B cell (primary cell): ENCODE measurements at regions of chr10 and their contacts with region 1.

Region 1: DNA sequence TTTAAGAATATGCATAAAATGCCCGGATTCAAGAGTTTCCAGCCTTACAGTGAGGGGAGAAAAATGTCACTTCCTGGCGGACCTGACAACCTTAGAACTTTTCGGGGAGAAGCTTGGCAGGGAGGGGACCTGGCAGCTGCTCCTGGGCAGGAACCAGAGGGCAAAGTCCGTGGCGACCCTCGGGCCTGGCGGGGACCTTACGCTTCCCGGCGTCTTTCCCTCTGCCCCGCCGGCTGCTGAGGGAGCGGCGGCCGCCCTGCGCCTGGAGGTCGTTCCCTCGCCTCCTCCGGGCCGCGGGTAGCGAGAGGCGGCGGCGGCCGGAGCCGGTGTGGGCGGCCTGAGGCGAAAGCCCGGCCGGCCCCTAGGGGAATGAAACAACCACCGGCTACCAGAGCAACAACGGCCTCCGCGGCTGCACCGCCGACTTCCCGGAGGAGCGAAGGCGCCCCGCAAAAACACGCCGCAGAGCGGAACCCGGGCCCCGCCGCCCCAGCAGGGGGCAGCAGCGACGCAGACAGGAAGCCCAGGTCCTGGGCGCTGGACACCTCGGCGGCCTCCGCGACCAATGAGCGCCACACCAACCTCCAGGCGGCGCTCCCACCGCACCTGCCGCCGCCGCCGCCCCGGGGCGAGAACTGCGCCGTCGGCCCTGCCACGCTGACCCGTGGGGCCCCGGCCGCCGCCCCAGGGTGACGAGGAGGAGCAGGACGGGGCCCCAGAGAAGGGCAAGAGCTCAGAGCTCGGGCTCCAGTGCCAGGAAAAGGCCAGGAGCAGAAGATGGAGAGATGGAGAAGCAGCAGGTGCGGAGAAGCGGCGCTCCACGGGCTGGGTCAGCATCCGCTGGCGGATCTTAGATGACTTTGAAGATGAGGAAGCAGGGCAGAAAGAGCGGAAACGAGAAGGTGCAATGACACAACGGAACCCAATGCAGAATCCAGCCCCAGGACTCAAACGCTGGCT is 10.5 kb upstream of the ACSM6 start:
- DNase-seq: peak; percentile 89
- ATAC-seq: peak; percentile 97
- H3K4me3 ChIP-seq: peak overlapping the region; percentile 41 to 75 (median 55)
- H3K4me3 Mint-ChIP-seq: peak overlapping the region; percentile 87
- H3K27ac ChIP-seq: peak overlapping the region; percentile 25 to 79
- H3K27ac Mint-ChIP-seq: peak overlapping the region; percentile 82
- H3K4me1 ChIP-seq: peaks cover 0 to 7% of the 10 kb centered on the region in 2 donors
- H3K4me1 Mint-ChIP-seq: peaks cover 7% of the 10 kb centered on the region
- H3K27me3 ChIP-seq: no peaks in the 10 kb centered on the region
- H3K27me3 Mint-ChIP-seq: no peaks in the 10 kb centered on the region
- CTCF ChIP-seq: peak; percentile 97

Region 2: DNA sequence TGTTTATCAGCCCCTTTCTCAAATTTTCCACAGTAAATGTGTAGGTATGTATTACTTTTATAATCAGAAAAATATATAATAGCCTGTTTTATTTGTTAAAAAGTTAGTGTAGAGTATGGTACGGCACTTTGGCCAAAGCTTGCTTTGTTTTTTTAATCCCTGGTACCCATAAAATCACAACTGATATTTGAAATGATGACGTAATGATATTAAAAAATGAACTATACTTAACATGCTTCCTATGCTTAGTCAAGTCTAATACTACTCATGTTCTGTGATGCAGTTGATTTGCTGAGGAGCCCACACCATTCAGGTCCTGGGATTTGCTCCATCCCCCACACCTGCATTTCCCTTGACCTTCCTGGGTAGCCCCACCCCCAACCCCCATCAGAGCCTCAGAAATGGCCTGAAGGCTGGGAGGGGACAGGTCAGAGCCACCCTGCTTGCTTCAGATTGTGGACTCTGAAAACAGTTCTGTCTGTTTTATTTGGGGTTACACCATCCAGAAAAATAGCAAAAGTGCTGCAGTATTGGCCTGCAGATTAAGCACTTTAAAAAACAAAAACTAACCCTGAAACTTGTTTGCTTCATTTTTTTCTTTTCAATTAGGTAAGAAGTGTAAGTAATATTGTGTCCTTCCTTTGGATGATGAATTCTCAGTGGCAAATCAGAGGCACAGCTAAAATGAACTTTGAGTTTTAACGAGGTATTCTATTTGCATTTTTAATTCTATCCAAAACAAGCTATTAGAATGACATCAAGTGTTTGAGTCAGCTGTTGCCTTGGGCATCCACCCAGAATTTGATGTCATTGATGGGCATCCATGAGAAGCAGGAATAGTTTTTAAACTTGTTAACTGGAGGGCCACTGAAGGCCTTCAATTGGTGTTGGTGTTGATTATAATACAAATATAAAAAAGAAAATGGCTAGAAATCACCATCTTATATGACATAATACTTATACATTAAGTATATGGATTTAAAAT is 1166.5 kb before region 1 on chr10:
- CTCF ChIA-PET with region 1: no interaction called
- POLR2A ChIA-PET with region 1: no interaction called
- intact Hi-C with region 1: no loop called
- DNase-seq: no peak
- ATAC-seq: no peak
- H3K4me3 ChIP-seq: no peak overlapping the region
- H3K4me3 Mint-ChIP-seq: no peak overlapping the region
- H3K27ac ChIP-seq: no peak overlapping the region
- H3K27ac Mint-ChIP-seq: no peak overlapping the region
- H3K4me1 ChIP-seq: no peaks in the 10 kb centered on the region
- H3K4me1 Mint-ChIP-seq: no peaks in the 10 kb centered on the region
- H3K27me3 ChIP-seq: no peaks in the 10 kb centered on the region
- H3K27me3 Mint-ChIP-seq: peaks cover 6% of the 10 kb centered on the region
- CTCF ChIP-seq: no peak

Region 3: DNA sequence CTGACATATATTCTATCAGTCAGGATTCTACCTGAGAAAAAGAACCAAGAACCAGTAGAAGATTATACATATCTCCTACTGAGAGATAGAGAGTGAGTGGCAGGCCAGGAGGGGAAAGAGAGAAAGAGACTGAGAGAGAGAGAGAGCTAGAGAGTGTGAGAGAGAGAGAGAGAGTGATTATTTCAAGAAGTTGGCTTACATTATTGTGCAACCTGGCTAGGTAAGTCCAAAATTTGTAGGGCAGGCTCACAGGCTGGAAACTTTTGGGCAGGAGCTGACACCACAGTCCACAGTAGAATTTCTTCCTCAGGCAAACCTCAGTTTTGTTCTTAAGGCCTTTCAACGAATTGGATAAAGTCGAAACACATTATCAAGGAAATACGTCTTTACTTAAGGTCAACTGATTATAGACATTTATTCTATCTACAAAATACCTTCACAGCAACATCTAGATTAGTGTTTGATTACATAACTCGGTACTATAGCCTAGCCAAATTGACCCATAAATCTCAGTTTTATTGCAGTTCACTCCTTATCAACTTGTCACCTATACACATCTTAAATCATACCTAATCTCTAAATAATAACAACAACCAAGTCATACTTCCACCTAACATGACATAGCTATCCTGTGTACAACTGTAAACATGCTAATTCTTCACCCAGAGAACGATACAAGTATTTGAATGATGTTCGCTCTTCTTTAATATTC is 517.0 kb before region 1 on chr10:
- CTCF ChIA-PET with region 1: no interaction called
- POLR2A ChIA-PET with region 1: no interaction called
- intact Hi-C with region 1: no loop called
- DNase-seq: no peak
- ATAC-seq: no peak
- H3K4me3 ChIP-seq: no peak overlapping the region
- H3K4me3 Mint-ChIP-seq: no peak overlapping the region
- H3K27ac ChIP-seq: no peak overlapping the region
- H3K27ac Mint-ChIP-seq: no peak overlapping the region
- H3K4me1 ChIP-seq: no peaks in the 10 kb centered on the region
- H3K4me1 Mint-ChIP-seq: no peaks in the 10 kb centered on the region
- H3K27me3 ChIP-seq: no peaks in the 10 kb centered on the region
- H3K27me3 Mint-ChIP-seq: peaks cover 4% of the 10 kb centered on the region
- CTCF ChIP-seq: no peak

Region 4: DNA sequence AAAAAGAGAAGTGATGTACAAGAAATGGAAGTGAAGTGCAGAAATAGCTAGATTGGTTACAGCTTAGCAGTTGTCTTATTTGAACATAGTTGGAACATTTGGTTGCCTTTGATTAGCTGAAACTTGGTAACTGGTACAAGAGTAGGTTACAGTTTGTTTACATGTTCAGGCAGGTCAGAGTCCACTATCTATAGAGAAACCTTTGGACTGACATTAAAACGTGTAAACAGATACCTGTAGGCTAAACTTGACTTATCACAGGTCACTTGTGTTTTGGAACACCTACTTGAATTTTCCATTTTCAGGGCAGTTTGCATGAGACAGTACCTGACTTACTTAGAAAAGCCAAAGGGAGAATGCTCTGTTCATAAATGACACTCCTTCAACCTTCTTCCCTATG is 85.7 kb before region 1 on chr10:
- CTCF ChIA-PET with region 1: no interaction called
- POLR2A ChIA-PET with region 1: no interaction called
- intact Hi-C with region 1: no loop called
- DNase-seq: no peak
- ATAC-seq: no peak
- H3K4me3 ChIP-seq: no peak overlapping the region
- H3K4me3 Mint-ChIP-seq: no peak overlapping the region
- H3K27ac ChIP-seq: no peak overlapping the region
- H3K27ac Mint-ChIP-seq: no peak overlapping the region
- H3K4me1 ChIP-seq: no peaks in the 10 kb centered on the region
- H3K4me1 Mint-ChIP-seq: no peaks in the 10 kb centered on the region
- H3K27me3 ChIP-seq: no peaks in the 10 kb centered on the region
- H3K27me3 Mint-ChIP-seq: peaks cover 5% of the 10 kb centered on the region
- CTCF ChIP-seq: no peak

Region 5: DNA sequence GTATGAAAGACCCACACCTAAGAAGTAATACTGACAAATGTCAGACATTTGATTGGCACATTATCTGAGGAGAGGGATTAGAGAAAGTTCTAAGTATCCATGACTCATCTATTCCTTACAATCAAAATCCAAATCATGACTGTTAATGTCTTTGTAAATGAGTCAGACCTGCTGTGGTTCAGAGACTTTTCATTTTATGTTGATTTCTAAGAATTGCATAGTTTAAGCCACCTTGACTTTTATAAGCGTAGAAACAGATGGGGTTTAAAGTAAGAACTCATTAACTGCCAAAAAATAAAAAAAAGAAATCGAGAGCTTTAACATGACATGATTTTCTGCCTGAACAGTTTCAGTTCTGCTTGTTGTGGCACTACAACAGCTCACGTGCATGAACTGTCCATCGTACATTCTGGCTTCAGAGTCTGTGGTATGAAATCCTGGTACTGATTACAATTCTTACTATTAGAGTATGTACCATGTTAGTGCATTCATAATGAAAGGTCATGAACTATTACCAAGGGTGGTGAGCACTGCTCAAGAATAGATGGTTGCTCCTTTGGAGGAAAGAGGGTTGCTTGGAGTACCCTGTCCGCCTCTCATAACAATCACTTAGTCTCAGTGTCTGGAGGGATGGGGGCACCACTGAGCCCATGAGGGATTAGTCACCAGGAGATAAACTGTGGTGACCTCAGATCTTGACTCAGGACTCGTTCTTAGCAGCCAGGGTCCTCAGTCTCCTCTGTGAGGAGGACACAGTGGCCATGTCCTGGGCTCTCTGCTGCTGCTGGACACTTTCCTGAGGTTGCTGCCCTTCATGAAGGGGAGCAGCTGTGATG is 52.7 kb after region 1 on chr10:
- CTCF ChIA-PET with region 1: interaction called, 3 read pairs
- POLR2A ChIA-PET with region 1: no interaction called
- intact Hi-C with region 1: loop called (anchors 2 kb)
- DNase-seq: peak; percentile 56
- ATAC-seq: peak; percentile 76
- H3K4me3 ChIP-seq: no peak overlapping the region
- H3K4me3 Mint-ChIP-seq: peak overlapping the region; percentile 39
- H3K27ac ChIP-seq: peak overlapping the region in 1 of 2 donors; percentile 50
- H3K27ac Mint-ChIP-seq: peak overlapping the region; percentile 42
- H3K4me1 ChIP-seq: peaks cover 11 to 15% of the 10 kb centered on the region in 2 donors
- H3K4me1 Mint-ChIP-seq: peaks cover 20% of the 10 kb centered on the region
- H3K27me3 ChIP-seq: no peaks in the 10 kb centered on the region
- H3K27me3 Mint-ChIP-seq: no peaks in the 10 kb centered on the region
- CTCF ChIP-seq: no peak